ENCODE measurements at regions of chr5 and their contacts with region 1.

Region 1: GRCh38 chr5:95664204-95664786 is 17.7 kb downstream of the RFESD start:
- DNase-seq: peak in 1 of 2 donors; percentile 66
- ATAC-seq: peak; percentile 59 to 64 (median 61)
- H3K4me3 ChIP-seq: no peak overlapping the region
- H3K4me3 Mint-ChIP-seq: no peak overlapping the region
- H3K27ac ChIP-seq: no peak overlapping the region
- H3K27ac Mint-ChIP-seq: no peak overlapping the region
- H3K4me1 ChIP-seq: no peaks in the 10 kb centered on the region
- H3K4me1 Mint-ChIP-seq: no peaks in the 10 kb centered on the region
- H3K27me3 ChIP-seq: no peaks in the 10 kb centered on the region
- H3K27me3 Mint-ChIP-seq: no peaks in the 10 kb centered on the region
- CTCF ChIP-seq: peak; percentile 91

Region 2: GRCh38 chr5:95591490-95591901 is 72.8 kb before region 1 on chr5:
- intact Hi-C with region 1: no loop called
- DNase-seq: no peak
- ATAC-seq: no peak
- H3K4me3 ChIP-seq: no peak overlapping the region
- H3K4me3 Mint-ChIP-seq: no peak overlapping the region
- H3K27ac ChIP-seq: no peak overlapping the region
- H3K27ac Mint-ChIP-seq: no peak overlapping the region
- H3K4me1 ChIP-seq: no peaks in the 10 kb centered on the region
- H3K4me1 Mint-ChIP-seq: peaks cover 0 to 6% of the 10 kb centered on the region in 2 donors
- H3K27me3 ChIP-seq: no peaks in the 10 kb centered on the region
- H3K27me3 Mint-ChIP-seq: no peaks in the 10 kb centered on the region
- CTCF ChIP-seq: no peak

Region 3: GRCh38 chr5:95631991-95632675 is 32.2 kb before region 1 on chr5:
- intact Hi-C with region 1: no loop called
- DNase-seq: peak; percentile 39 to 84
- ATAC-seq: peak; percentile 97 to 99 (median 98)
- H3K4me3 ChIP-seq: no peak overlapping the region
- H3K4me3 Mint-ChIP-seq: peak overlapping the region; percentile 5
- H3K27ac ChIP-seq: peak overlapping the region; percentile 19
- H3K27ac Mint-ChIP-seq: peak overlapping the region; percentile 74 to 85
- H3K4me1 ChIP-seq: peaks cover 4% of the 10 kb centered on the region
- H3K4me1 Mint-ChIP-seq: peaks cover 11 to 12% of the 10 kb centered on the region in 2 donors
- H3K27me3 ChIP-seq: no peaks in the 10 kb centered on the region
- H3K27me3 Mint-ChIP-seq: peaks cover 0 to 2% of the 10 kb centered on the region in 2 donors
- CTCF ChIP-seq: no peak

Region 4: GRCh38 chr5:95781101-95781583 is 116.8 kb after region 1 on chr5:
- intact Hi-C with region 1: loop called (anchors 1 kb)
- DNase-seq: peak; percentile 54 to 88
- ATAC-seq: peak; percentile 88 to 94 (median 94)
- H3K4me3 ChIP-seq: no peak overlapping the region
- H3K4me3 Mint-ChIP-seq: peak overlapping the region; percentile 51
- H3K27ac ChIP-seq: no peak overlapping the region
- H3K27ac Mint-ChIP-seq: peak overlapping the region; percentile 76 to 79
- H3K4me1 ChIP-seq: peaks cover 13% of the 10 kb centered on the region
- H3K4me1 Mint-ChIP-seq: peaks cover 23 to 24% of the 10 kb centered on the region in 2 donors
- H3K27me3 ChIP-seq: no peaks in the 10 kb centered on the region
- H3K27me3 Mint-ChIP-seq: no peaks in the 10 kb centered on the region
- CTCF ChIP-seq: peak; percentile 94

Measured in natural killer cell (primary cell).